A549 (cell line): ENCODE measurements at regions of chr7 and their contacts with region 1.

Region 1: GRCh38 chr7:116671681-116672595 is at the start of gene MET:
- DNase-seq: peak; percentile 88 to 94
- ATAC-seq: peak; percentile 94 to 96
- H3K4me3 ChIP-seq: peak within 1 kb of the TSS; percentile 94
- H3K27ac ChIP-seq: peak within 1 kb of the TSS; percentile 95 to 98
- H3K4me1 ChIP-seq: peaks cover 35% of the 10 kb centered on the region
- CTCF ChIP-seq: peak; percentile 84
- EP300 ChIP-seq: peak in 1 of 2 experiments; percentile 50; a peak in 1 of 5 replicates
- POLR2A ChIP-seq: peak; percentile 58
- RAD21 ChIP-seq: peak; percentile 94 to 98
- polyA plus RNA-seq, gene MET: 161 and 165 TPM in 2 replicates

Region 2: DNA sequence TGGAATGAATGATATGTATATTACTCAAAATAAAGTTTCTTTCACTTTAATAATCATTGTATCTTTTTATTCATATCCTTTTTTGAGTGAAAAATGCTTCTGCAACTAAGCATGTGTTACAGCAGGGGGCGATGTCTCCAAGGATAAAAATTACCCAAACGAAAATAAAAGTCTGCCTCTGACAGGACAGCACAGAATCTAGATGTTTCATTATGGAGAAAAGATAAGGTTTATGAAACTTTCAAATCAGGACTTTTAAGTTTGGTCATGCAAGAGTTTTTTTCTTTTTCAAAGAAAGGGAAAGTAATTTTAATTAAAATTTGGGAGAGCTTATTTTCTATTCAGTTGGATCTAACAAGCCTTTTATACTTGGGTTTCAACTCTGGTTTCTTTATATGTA is 413.2 kb before region 1 on chr7:
- CTCF ChIA-PET with region 1: interaction called, 3 read pairs
- POLR2A ChIA-PET with region 1: interaction called, 12 read pairs
- DNase-seq: peak; percentile 36 to 80
- ATAC-seq: peak in 1 of 2 experiments; percentile 39; a peak in 3 of 6 replicates
- H3K4me3 ChIP-seq: no peak overlapping the region
- H3K27ac ChIP-seq: peak overlapping the region; percentile 73 to 88
- H3K4me1 ChIP-seq: peaks cover 32% of the 10 kb centered on the region
- CTCF ChIP-seq: peak; percentile 94
- EP300 ChIP-seq: no peak
- POLR2A ChIP-seq: no peak
- RAD21 ChIP-seq: peak; percentile 99

Region 3: GRCh38 chr7:116407165-116407564 is 264.8 kb before region 1 on chr7:
- CTCF ChIA-PET with region 1: no interaction called
- POLR2A ChIA-PET with region 1: no interaction called
- DNase-seq: no peak
- ATAC-seq: no peak
- H3K4me3 ChIP-seq: no peak overlapping the region
- H3K27ac ChIP-seq: peak overlapping the region in 1 of 2 experiments; percentile 59; a peak in 1 of 6 replicates
- H3K4me1 ChIP-seq: peaks cover 26% of the 10 kb centered on the region
- CTCF ChIP-seq: no peak
- EP300 ChIP-seq: no peak
- POLR2A ChIP-seq: no peak
- RAD21 ChIP-seq: no peak

Region 4: DNA sequence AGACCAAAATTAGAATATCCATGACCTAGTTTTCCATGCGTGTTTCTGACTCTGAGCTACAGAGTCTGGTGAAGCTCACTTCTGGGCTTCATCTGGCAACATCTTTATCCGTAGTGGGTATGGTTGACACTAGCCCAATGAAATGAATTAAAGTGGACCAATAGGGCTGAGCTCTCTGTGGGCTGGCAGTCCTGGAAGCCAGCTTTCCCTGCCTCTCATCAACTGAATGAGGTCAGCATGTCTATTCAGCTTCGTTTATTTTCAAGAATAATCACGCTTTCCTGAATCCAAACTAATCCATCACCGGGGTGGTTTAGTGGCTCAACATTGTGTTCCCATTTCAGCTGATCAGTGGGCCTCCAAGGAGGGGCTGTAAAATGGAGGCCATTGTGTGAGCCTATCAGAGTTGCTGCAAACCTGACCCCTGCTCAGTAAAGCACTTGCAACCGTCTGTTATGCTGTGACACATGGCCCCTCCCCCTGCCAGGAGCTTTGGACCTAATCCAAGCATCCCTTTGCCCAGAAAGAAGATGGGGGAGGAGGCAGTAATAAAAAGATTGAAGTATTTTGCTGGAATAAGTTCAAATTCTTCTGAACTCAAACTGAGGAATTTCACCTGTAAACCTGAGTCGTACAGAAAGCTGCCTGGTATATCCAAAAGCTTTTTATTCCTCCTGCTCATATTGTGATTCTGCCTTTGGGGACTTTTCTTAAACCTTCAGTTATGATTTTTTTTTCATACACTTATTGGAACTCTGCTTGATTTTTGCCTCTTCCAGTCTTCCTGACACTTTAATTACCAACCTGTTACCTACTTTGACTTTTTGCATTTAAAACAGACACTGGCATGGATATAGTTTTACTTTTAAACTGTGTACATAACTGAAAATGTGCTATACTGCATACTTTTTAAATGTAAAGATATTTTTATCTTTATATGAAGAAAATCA is 111.6 kb before region 1 on chr7:
- CTCF ChIA-PET with region 1: no interaction called
- POLR2A ChIA-PET with region 1: no interaction called
- DNase-seq: no peak
- ATAC-seq: peak in 1 of 2 experiments; percentile 23; a peak in 2 of 6 replicates
- H3K4me3 ChIP-seq: no peak overlapping the region
- H3K27ac ChIP-seq: 0 out of 6 replicates have a peak overlapping the region, but pooled peaks of 1 of the 2 experiments have one; percentile 11
- H3K4me1 ChIP-seq: peaks cover 29% of the 10 kb centered on the region
- CTCF ChIP-seq: no peak
- EP300 ChIP-seq: no peak
- POLR2A ChIP-seq: no peak
- RAD21 ChIP-seq: no peak

Region 5: DNA sequence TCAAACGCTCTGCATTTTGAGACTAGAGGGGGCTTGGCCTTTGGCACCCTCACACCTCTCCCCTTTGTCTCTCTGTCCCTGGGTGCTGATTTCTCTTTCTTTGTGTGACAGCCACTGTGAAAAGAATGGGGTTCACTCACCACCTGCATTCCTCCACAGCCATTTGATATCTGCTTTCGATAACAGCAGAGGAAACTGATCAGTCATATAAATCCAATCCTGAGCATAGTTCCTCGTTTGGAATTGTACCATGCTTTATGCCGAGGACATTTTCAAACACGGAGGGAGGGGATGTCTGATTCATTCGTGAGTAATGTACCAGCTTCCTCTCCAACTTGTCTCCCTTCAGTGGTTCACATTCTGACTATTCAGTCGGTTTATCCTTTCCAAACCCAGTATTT is 15.9 kb after region 1 on chr7:
- CTCF ChIA-PET with region 1: interaction called, 10 read pairs
- POLR2A ChIA-PET with region 1: interaction called, 9 read pairs
- DNase-seq: peak; percentile 49 to 53
- ATAC-seq: peak; percentile 63 to 75; a peak in 4 of 6 replicates
- H3K4me3 ChIP-seq: peak overlapping the region; percentile 17; the same call in 1 of the 3 replicates
- H3K27ac ChIP-seq: peak overlapping the region; percentile 89 to 92
- H3K4me1 ChIP-seq: peaks cover 73% of the 10 kb centered on the region
- CTCF ChIP-seq: no peak
- EP300 ChIP-seq: no peak
- POLR2A ChIP-seq: no peak
- RAD21 ChIP-seq: no peak

Region 6: GRCh38 chr7:116726713-116727431 is 54.9 kb after region 1 on chr7:
- CTCF ChIA-PET with region 1: interaction called, 13 read pairs
- POLR2A ChIA-PET with region 1: interaction called, 4 read pairs
- DNase-seq: no peak
- ATAC-seq: peak; percentile 26 to 30; a peak in 3 of 6 replicates
- H3K4me3 ChIP-seq: no peak overlapping the region
- H3K27ac ChIP-seq: peak overlapping the region; percentile 23 to 67; a peak in 4 of 6 replicates
- H3K4me1 ChIP-seq: peaks cover 70% of the 10 kb centered on the region
- CTCF ChIP-seq: no peak
- EP300 ChIP-seq: no peak
- POLR2A ChIP-seq: no peak
- RAD21 ChIP-seq: no peak

Region 7: DNA sequence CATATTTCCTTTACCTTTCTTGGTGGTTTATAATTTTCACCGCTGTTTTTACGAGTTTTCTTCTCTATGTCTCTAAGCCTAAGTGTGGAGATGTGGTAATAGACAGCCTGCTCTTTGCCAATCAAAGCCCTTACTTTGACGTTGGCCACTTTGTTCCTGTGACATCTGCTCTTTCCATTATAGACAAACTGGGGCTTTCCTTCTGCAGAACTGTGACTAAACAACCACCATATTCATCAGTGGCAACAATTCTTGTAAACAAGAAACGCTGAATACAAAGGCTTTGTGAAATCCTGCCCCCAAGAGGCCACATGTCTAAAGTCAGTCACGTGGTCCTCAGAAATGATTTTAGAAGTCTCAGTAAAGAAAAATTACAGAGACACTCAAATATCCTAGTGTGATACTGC is 130.8 kb after region 1 on chr7:
- CTCF ChIA-PET with region 1: interaction called, 30 read pairs
- POLR2A ChIA-PET with region 1: interaction called, 16 read pairs
- DNase-seq: peak; percentile 51 to 84
- ATAC-seq: peak; percentile 47 to 54
- H3K4me3 ChIP-seq: no peak overlapping the region
- H3K27ac ChIP-seq: peak overlapping the region; percentile 80 to 88
- H3K4me1 ChIP-seq: peaks cover 76% of the 10 kb centered on the region
- CTCF ChIP-seq: peak; percentile 68
- EP300 ChIP-seq: no peak
- POLR2A ChIP-seq: no peak
- RAD21 ChIP-seq: peak; percentile 68

Region 8: DNA sequence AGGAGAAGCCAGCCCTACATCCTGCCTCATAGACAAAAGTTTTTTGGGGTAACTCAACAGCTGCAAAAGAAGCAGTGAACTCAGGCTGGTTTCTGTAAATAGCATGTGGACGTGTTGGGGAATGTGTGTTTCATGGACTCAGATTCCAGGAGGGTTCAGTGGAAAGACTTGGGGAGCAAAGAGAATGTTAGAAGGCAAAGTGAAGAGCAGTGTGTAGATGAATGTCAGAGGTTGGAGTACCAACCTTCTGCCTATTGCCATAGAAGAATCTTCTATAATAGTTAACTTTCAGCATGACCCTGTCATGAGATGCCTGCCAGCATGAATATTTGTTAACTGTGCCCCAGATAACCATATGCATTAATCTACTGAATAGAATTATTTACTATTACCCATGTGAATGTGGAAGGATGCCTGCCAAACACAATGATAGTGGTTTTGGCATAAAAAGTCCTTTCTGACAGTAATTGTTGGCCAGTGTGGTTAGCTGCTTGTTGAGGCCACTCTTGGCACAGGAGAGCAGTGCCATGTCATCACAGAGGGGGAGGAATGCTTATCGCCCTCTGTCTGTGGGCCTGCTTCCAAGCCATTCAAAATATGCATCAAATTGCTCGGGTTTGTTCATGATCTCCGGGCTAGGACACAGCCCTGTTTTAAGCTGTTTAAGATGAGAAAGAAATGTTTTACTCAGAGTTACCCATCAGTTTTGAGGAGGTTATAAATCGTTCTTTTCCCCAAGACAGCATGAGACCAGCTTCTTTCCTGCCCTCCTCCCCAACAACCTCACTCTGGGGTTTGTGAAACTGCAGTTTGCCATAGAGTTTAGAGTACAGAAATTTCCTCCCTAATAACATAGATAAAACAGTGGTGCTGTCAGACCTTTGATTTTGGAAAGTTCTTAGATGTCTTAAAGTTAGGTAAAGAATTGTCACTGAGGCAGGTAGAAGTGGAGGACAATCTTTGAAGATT is 485.6 kb after region 1 on chr7:
- CTCF ChIA-PET with region 1: no interaction called
- POLR2A ChIA-PET with region 1: no interaction called
- DNase-seq: peak; percentile 17 to 37
- ATAC-seq: peak; percentile 76 to 90
- H3K4me3 ChIP-seq: no peak overlapping the region
- H3K27ac ChIP-seq: peak overlapping the region in 1 of 2 experiments; percentile 58; a peak in 2 of 6 replicates
- H3K4me1 ChIP-seq: peaks cover 36% of the 10 kb centered on the region
- CTCF ChIP-seq: peak; percentile 26; the same call in 2 of the 3 replicates
- EP300 ChIP-seq: no peak
- POLR2A ChIP-seq: no peak
- RAD21 ChIP-seq: 0 out of 5 replicates have a peak, but pooled peaks of 1 of the 2 experiments have one; percentile 1